ENCODE measurements at regions of chr1 and their contacts with region 1.

Region 1: GRCh38 chr1:226349801-226350518 is 41.0 kb upstream of the LIN9 start:
- DNase-seq: peak; percentile 85
- H3K4me3 ChIP-seq: peak overlapping the region; percentile 57
- H3K27ac ChIP-seq: peak overlapping the region; percentile 98
- H3K4me1 ChIP-seq: peaks cover 89% of the 10 kb centered on the region
- CTCF ChIP-seq: no peak

Region 2: GRCh38 chr1:226116673-226117072 is 233.3 kb before region 1 on chr1:
- CTCF ChIA-PET with region 1: no interaction called
- POLR2A ChIA-PET with region 1: no interaction called
- intact Hi-C with region 1: no loop called
- DNase-seq: no peak
- H3K4me3 ChIP-seq: no peak overlapping the region
- H3K27ac ChIP-seq: no peak overlapping the region
- H3K4me1 ChIP-seq: peaks cover 42% of the 10 kb centered on the region
- CTCF ChIP-seq: no peak

Region 3: GRCh38 chr1:226132728-226133503 is 217.0 kb before region 1 on chr1:
- CTCF ChIA-PET with region 1: no interaction called
- POLR2A ChIA-PET with region 1: interaction called, 3 read pairs
- intact Hi-C with region 1: loop called (anchors 1 kb)
- DNase-seq: no peak
- H3K4me3 ChIP-seq: no peak overlapping the region
- H3K27ac ChIP-seq: no peak overlapping the region
- H3K4me1 ChIP-seq: peaks cover 30% of the 10 kb centered on the region
- CTCF ChIP-seq: no peak

Region 4: GRCh38 chr1:226332947-226333346 is 17.0 kb before region 1 on chr1:
- CTCF ChIA-PET with region 1: no interaction called
- POLR2A ChIA-PET with region 1: interaction called, 13 read pairs
- intact Hi-C with region 1: no loop called
- DNase-seq: peak; percentile 40
- H3K4me3 ChIP-seq: peak overlapping the region; percentile 55
- H3K27ac ChIP-seq: peak overlapping the region; percentile 69
- H3K4me1 ChIP-seq: peaks cover 62% of the 10 kb centered on the region
- CTCF ChIP-seq: no peak

Region 5: DNA sequence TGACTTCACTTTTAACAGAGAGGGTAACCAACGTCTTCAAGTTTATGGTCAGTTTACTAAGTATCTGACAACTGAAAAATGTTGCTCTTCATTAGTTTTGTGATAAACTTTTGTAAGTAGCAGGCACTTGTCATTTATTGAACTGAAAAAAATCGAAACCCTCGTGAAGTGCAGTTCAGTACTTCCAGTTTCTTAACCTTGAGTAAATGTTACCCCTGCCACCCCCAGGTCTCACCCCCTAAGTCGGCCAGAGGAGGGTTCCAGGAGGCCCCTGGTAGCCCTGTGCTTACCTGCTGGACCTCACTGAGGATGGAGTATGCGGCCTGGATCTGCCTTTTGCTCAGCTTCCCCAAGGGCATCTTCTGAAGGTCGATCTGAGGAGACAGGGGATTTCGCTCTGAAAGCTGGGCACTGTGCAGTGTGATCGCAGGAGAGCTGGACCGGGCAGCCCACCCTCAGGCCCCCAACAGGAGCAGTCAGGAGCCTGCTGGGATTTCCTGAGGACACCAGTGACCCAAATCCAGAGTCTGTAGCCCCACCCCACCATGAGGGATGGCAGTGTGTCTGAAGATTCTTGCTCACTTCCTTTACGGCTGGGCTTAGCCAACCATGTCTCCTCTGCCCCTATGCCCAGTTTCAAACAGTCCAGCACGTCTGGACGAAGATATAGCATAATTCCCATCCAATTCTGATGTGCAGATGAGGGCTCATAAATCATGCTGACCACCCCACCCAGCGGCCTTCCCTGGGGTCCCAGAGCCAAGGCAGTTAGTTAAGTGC is 20.4 kb after region 1 on chr1:
- CTCF ChIA-PET with region 1: no interaction called
- POLR2A ChIA-PET with region 1: interaction called, 8 read pairs
- intact Hi-C with region 1: loop called (anchors 1 kb)
- DNase-seq: peak; percentile 83
- H3K4me3 ChIP-seq: peak overlapping the region; percentile 61
- H3K27ac ChIP-seq: peak overlapping the region; percentile 88
- H3K4me1 ChIP-seq: peaks cover 53% of the 10 kb centered on the region
- CTCF ChIP-seq: no peak

Measured in OCI-LY7 (cell line).